ENCODE measurements at regions of chr9 and their contacts with region 1.

Region 1: GRCh38 chr9:87950765-87951488 is 23.4 kb downstream of the CDK20 start:
- DNase-seq: peak; percentile 12
- H3K4me3 Mint-ChIP-seq: no peak overlapping the region
- H3K27ac Mint-ChIP-seq: no peak overlapping the region
- H3K4me1 Mint-ChIP-seq: no peaks in the 10 kb centered on the region
- H3K27me3 Mint-ChIP-seq: no peaks in the 10 kb centered on the region
- CTCF ChIP-seq: peak; percentile 37

Region 2: DNA sequence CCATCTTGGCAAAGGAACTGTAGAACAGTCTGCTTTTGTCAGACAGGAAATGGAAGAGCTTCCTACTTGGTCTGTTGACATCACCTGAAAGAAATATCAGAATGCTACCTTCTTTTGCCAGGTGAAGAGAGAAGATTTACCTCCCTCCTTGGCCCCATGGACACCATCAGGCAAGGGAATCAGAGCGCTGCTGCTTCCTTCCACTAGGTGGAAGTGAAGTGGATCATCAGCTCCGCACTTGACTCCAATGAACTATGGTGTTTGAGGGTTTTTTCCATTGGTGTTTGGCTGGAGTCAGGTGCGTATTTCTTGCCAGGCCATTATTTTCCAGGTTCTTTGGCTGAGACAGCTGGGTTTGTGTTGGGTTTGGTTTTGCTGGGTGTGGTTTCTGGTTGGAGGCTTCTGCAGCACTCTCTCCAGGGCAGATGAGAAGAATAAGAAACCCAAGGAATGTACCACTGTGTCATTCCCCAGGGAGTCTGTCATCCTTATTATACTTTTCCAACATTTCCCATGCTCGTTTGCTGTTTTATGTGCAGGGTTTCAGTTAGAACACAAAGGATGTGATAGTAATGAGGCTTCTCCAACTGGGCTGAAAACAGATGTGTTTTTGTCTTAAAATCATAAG is 55.8 kb before region 1 on chr9:
- CTCF ChIA-PET with region 1: no interaction called
- intact Hi-C with region 1: no loop called
- DNase-seq: no peak
- H3K4me3 Mint-ChIP-seq: no peak overlapping the region
- H3K27ac Mint-ChIP-seq: no peak overlapping the region
- H3K4me1 Mint-ChIP-seq: no peaks in the 10 kb centered on the region
- H3K27me3 Mint-ChIP-seq: no peaks in the 10 kb centered on the region
- CTCF ChIP-seq: no peak

Region 3: DNA sequence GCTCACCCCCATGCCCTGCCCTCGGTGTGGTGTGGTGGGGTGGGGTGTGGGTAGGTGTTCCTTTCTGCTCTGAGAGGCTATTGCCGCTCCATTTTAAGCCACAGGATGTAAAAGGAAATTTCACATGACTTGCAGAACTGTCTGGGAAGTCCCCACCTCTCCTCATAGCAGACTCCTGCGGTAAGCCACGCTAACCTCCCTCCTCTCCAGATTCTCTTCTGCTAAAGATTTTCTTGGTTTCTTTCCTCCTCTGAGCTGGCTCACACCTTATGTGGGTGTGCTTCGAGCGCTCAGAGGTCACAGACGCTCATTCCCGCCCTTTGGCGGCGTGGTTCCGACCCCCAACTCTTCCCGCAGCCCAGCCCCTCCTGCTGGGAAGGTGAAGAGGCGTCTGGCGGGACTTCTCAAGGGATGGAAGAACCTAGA is 56.3 kb after region 1 on chr9:
- CTCF ChIA-PET with region 1: no interaction called
- intact Hi-C with region 1: no loop called
- DNase-seq: peak; percentile 9
- H3K4me3 Mint-ChIP-seq: no peak overlapping the region
- H3K27ac Mint-ChIP-seq: peak overlapping the region; percentile 70
- H3K4me1 Mint-ChIP-seq: peaks cover 14% of the 10 kb centered on the region
- H3K27me3 Mint-ChIP-seq: no peaks in the 10 kb centered on the region
- CTCF ChIP-seq: no peak

Region 4: GRCh38 chr9:88041447-88041846 is 90.5 kb after region 1 on chr9:
- CTCF ChIA-PET with region 1: interaction called, 3 read pairs
- intact Hi-C with region 1: loop called (anchors 1 kb)
- DNase-seq: no peak
- H3K4me3 Mint-ChIP-seq: no peak overlapping the region
- H3K27ac Mint-ChIP-seq: no peak overlapping the region
- H3K4me1 Mint-ChIP-seq: no peaks in the 10 kb centered on the region
- H3K27me3 Mint-ChIP-seq: no peaks in the 10 kb centered on the region
- CTCF ChIP-seq: peak; percentile 33